ENCODE measurements at regions of chr14 and their contacts with region 1.

Region 1: GRCh38 chr14:55270832-55271565 is at the start of gene FBXO34:
- DNase-seq: peak; percentile 96 to 98 (median 98)
- H3K4me3 ChIP-seq: peak within 1 kb of the TSS; percentile 66 to 93 (median 87)
- H3K4me3 Mint-ChIP-seq: peak within 1 kb of the TSS; percentile 88 to 95
- H3K27ac ChIP-seq: peak within 1 kb of the TSS; percentile 99 to 100
- H3K27ac Mint-ChIP-seq: peak within 1 kb of the TSS; percentile 94 to 99 (median 99)
- H3K4me1 ChIP-seq: peaks cover 24 to 26% of the 10 kb centered on the region in 2 donors
- H3K4me1 Mint-ChIP-seq: peaks cover 30% of the 10 kb centered on the region
- H3K27me3 ChIP-seq: no peaks in the 10 kb centered on the region
- H3K27me3 Mint-ChIP-seq: peaks cover 0 to 4% (median 0%) of the 10 kb centered on the region in 3 donors
- CTCF ChIP-seq: peak; percentile 99
- polyA plus RNA-seq, gene FBXO34: 10.3 to 18.1 (median 17.3) TPM

Region 2: GRCh38 chr14:54387328-54387727 is 883.7 kb before region 1 on chr14:
- intact Hi-C with region 1: no loop called
- DNase-seq: no peak
- H3K4me3 ChIP-seq: no peak overlapping the region
- H3K4me3 Mint-ChIP-seq: no peak overlapping the region
- H3K27ac ChIP-seq: no peak overlapping the region
- H3K27ac Mint-ChIP-seq: no peak overlapping the region
- H3K4me1 ChIP-seq: no peaks in the 10 kb centered on the region
- H3K4me1 Mint-ChIP-seq: peaks cover 4% of the 10 kb centered on the region
- H3K27me3 ChIP-seq: no peaks in the 10 kb centered on the region
- H3K27me3 Mint-ChIP-seq: peaks cover 0 to 3% (median 0%) of the 10 kb centered on the region in 3 donors
- CTCF ChIP-seq: no peak

Region 3: GRCh38 chr14:55102141-55102621 is 168.8 kb before region 1 on chr14:
- intact Hi-C with region 1: no loop called
- DNase-seq: peak; percentile 74 to 92 (median 83)
- H3K4me3 ChIP-seq: no peak overlapping the region
- H3K4me3 Mint-ChIP-seq: peak overlapping the region in 1 of 2 donors; percentile 30
- H3K27ac ChIP-seq: peak overlapping the region; percentile 67 to 90
- H3K27ac Mint-ChIP-seq: peak overlapping the region; percentile 71 to 98 (median 92)
- H3K4me1 ChIP-seq: peaks cover 60 to 68% of the 10 kb centered on the region in 2 donors
- H3K4me1 Mint-ChIP-seq: peaks cover 54% of the 10 kb centered on the region
- H3K27me3 ChIP-seq: no peaks in the 10 kb centered on the region
- H3K27me3 Mint-ChIP-seq: peaks cover 0 to 7% (median 0%) of the 10 kb centered on the region in 3 donors
- CTCF ChIP-seq: no peak

Region 4: GRCh38 chr14:55354500-55354899 is 83.5 kb after region 1 on chr14:
- intact Hi-C with region 1: no loop called
- DNase-seq: peak in 2 of 3 donors; percentile 24 to 25
- H3K4me3 ChIP-seq: no peak overlapping the region
- H3K4me3 Mint-ChIP-seq: no peak overlapping the region
- H3K27ac ChIP-seq: peak overlapping the region in 1 of 2 donors; percentile 46
- H3K27ac Mint-ChIP-seq: peak overlapping the region in 4 of 7 donors; percentile 22 to 52 (median 46)
- H3K4me1 ChIP-seq: no peaks in the 10 kb centered on the region
- H3K4me1 Mint-ChIP-seq: no peaks in the 10 kb centered on the region
- H3K27me3 ChIP-seq: no peaks in the 10 kb centered on the region
- H3K27me3 Mint-ChIP-seq: peaks cover 0 to 2% (median 0%) of the 10 kb centered on the region in 3 donors
- CTCF ChIP-seq: peak; percentile 52

Region 5: DNA sequence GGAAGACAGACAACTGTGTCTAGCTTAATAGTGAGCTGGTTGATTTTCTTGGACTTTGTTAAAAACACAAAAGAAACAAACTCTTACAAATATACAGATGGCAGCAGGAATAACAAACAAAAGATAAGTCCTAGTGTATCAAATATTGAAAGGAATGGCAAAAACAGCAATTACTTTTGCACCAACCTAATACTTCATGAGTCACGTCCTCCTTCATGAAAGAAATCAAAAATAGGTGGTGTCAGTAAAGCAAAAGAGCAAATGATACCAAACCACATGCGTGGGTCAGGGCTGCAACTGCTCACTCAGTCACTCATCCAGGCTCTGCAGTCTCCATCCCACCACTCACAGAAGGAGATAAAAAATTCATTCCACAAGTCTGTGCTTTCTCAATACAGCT is 128.9 kb after region 1 on chr14:
- intact Hi-C with region 1: loop called in 1 of 2 experiments (anchors 10 kb)
- DNase-seq: no peak
- H3K4me3 ChIP-seq: no peak overlapping the region
- H3K4me3 Mint-ChIP-seq: no peak overlapping the region
- H3K27ac ChIP-seq: no peak overlapping the region
- H3K27ac Mint-ChIP-seq: no peak overlapping the region
- H3K4me1 ChIP-seq: no peaks in the 10 kb centered on the region
- H3K4me1 Mint-ChIP-seq: peaks cover 12% of the 10 kb centered on the region
- H3K27me3 ChIP-seq: no peaks in the 10 kb centered on the region
- H3K27me3 Mint-ChIP-seq: no peaks in the 10 kb centered on the region
- CTCF ChIP-seq: no peak

Measured in CD14-positive monocyte (primary cell).